ENCODE measurements at regions of chr10 and their contacts with region 1.

Region 1: GRCh38 chr10:8053446-8054290 is 820 bp upstream of the GATA3 start:
- DNase-seq: peak; percentile 80 to 98 (median 94)
- ATAC-seq: peak; percentile 59
- H3K4me3 ChIP-seq: peak overlapping the region; percentile 96
- H3K4me3 Mint-ChIP-seq: peak overlapping the region; percentile 95
- H3K27ac ChIP-seq: peak overlapping the region; percentile 61 to 76
- H3K27ac Mint-ChIP-seq: peak overlapping the region; percentile 97
- H3K4me1 ChIP-seq: peaks cover 67% of the 10 kb centered on the region
- H3K4me1 Mint-ChIP-seq: peaks cover 52% of the 10 kb centered on the region
- H3K27me3 ChIP-seq: peaks cover 37 to 44% of the 10 kb centered on the region in 2 experiments
- H3K27me3 Mint-ChIP-seq: peaks cover 38% of the 10 kb centered on the region
- CTCF ChIP-seq: peak; percentile 96

Region 2: GRCh38 chr10:8035006-8035640 is 18.5 kb before region 1 on chr10:
- CTCF ChIA-PET with region 1: interaction called, 3 read pairs
- POLR2A ChIA-PET with region 1: interaction called, 3 read pairs
- intact Hi-C with region 1: loop called in 1 of 2 experiments (anchors 2 kb)
- DNase-seq: peak in 2 of 14 experiments; percentile 42 to 50
- ATAC-seq: peak; percentile 41
- H3K4me3 ChIP-seq: no peak overlapping the region
- H3K4me3 Mint-ChIP-seq: peak overlapping the region; percentile 47
- H3K27ac ChIP-seq: no peak overlapping the region
- H3K27ac Mint-ChIP-seq: peak overlapping the region; percentile 60
- H3K4me1 ChIP-seq: peaks cover 46% of the 10 kb centered on the region
- H3K4me1 Mint-ChIP-seq: peaks cover 30% of the 10 kb centered on the region
- H3K27me3 ChIP-seq: peaks cover 76 to 77% of the 10 kb centered on the region in 2 experiments
- H3K27me3 Mint-ChIP-seq: peaks cover 88% of the 10 kb centered on the region
- CTCF ChIP-seq: no peak

Region 3: GRCh38 chr10:8245131-8245813 is 191.6 kb after region 1 on chr10:
- CTCF ChIA-PET with region 1: no interaction called
- POLR2A ChIA-PET with region 1: no interaction called
- intact Hi-C with region 1: loop called in 1 of 2 experiments (anchors 10 kb)
- DNase-seq: peak in 4 of 14 experiments; percentile 37 to 81 (median 69)
- ATAC-seq: peak; percentile 90
- H3K4me3 ChIP-seq: peak overlapping the region; percentile 1
- H3K4me3 Mint-ChIP-seq: peak overlapping the region; percentile 79
- H3K27ac ChIP-seq: peak overlapping the region; percentile 32 to 72
- H3K27ac Mint-ChIP-seq: peak overlapping the region; percentile 92
- H3K4me1 ChIP-seq: peaks cover 44% of the 10 kb centered on the region
- H3K4me1 Mint-ChIP-seq: peaks cover 77% of the 10 kb centered on the region
- H3K27me3 ChIP-seq: no peaks in the 10 kb centered on the region
- H3K27me3 Mint-ChIP-seq: no peaks in the 10 kb centered on the region
- CTCF ChIP-seq: no peak

Region 4: DNA sequence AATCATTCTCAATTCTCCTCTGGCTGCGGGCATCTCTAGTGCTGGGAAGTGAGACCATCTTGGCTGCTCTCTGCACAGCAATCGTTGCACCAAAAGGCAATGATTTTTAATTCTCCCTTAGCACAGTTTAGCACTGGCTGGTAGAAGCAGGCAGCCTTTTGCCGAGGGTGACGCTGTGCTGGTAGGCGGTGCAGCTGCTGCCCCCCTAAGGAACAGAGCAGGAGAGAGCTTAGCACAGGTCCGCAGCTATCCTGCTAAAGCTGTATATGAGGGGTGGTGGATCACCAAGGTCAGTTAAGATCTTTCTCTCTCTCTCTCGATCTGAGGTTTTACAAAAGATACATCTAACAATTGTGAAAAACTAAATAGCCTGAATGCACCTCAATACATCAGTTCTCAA is 391.0 kb after region 1 on chr10:
- CTCF ChIA-PET with region 1: no interaction called
- POLR2A ChIA-PET with region 1: interaction called, 7 read pairs
- intact Hi-C with region 1: loop called in 1 of 2 experiments (anchors 10 kb)
- DNase-seq: peak; percentile 6 to 73 (median 34)
- ATAC-seq: peak; percentile 87
- H3K4me3 ChIP-seq: no peak overlapping the region
- H3K4me3 Mint-ChIP-seq: no peak overlapping the region
- H3K27ac ChIP-seq: no peak overlapping the region
- H3K27ac Mint-ChIP-seq: no peak overlapping the region
- H3K4me1 ChIP-seq: peaks cover 5% of the 10 kb centered on the region
- H3K4me1 Mint-ChIP-seq: peaks cover 15% of the 10 kb centered on the region
- H3K27me3 ChIP-seq: no peaks in the 10 kb centered on the region
- H3K27me3 Mint-ChIP-seq: no peaks in the 10 kb centered on the region
- CTCF ChIP-seq: peak; percentile 57

Region 5: GRCh38 chr10:9010093-9010492 is 956.4 kb after region 1 on chr10:
- CTCF ChIA-PET with region 1: no interaction called
- POLR2A ChIA-PET with region 1: interaction called, 3 read pairs
- intact Hi-C with region 1: loop called in 1 of 2 experiments (anchors 10 kb)
- DNase-seq: peak in 10 of 14 experiments; percentile 8 to 85 (median 54)
- ATAC-seq: peak; percentile 88
- H3K4me3 ChIP-seq: no peak overlapping the region
- H3K4me3 Mint-ChIP-seq: peak overlapping the region; percentile 76
- H3K27ac ChIP-seq: no peak overlapping the region
- H3K27ac Mint-ChIP-seq: peak overlapping the region; percentile 85
- H3K4me1 ChIP-seq: peaks cover 8% of the 10 kb centered on the region
- H3K4me1 Mint-ChIP-seq: peaks cover 63% of the 10 kb centered on the region
- H3K27me3 ChIP-seq: no peaks in the 10 kb centered on the region
- H3K27me3 Mint-ChIP-seq: no peaks in the 10 kb centered on the region
- CTCF ChIP-seq: no peak

Region 6: DNA sequence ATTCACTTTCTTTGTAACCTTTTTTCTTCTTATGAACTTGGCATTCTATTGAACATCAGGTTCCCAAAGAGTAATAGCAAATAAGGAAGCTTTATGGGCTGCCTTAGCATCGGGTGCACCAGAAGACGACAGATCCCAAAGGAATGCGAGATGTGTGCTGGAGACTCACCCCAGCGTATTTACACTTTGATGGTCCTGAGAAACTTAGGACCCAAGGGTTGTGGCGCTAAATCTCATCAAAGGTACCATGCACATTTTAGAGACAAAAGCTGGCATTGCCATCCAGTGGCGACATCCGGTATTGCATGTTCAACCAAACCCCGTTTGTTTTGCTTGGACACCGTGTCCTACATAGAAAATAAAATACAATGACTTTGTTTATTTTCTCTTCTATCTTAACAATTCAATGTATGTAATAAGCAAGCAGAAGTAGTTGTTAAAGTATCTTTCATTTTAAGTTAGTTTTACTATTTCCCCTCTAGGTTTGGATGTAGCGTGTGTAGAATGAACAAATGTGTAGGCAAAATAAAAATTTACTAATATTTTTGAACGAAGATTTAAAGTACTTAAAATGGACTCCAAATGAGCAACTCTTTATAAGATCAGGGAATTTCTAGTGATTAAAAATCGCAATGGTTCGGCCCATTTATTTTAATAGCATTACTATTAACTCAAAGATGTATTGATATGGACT is 1155.6 kb after region 1 on chr10:
- CTCF ChIA-PET with region 1: no interaction called
- POLR2A ChIA-PET with region 1: interaction called, 3 read pairs
- intact Hi-C with region 1: loop called (anchors 5 to 10 kb)
- DNase-seq: peak; percentile 51 to 81 (median 69)
- ATAC-seq: peak; percentile 49
- H3K4me3 ChIP-seq: no peak overlapping the region
- H3K4me3 Mint-ChIP-seq: no peak overlapping the region
- H3K27ac ChIP-seq: no peak overlapping the region
- H3K27ac Mint-ChIP-seq: no peak overlapping the region
- H3K4me1 ChIP-seq: peaks cover 3% of the 10 kb centered on the region
- H3K4me1 Mint-ChIP-seq: peaks cover 8% of the 10 kb centered on the region
- H3K27me3 ChIP-seq: peaks cover 0 to 5% of the 10 kb centered on the region in 2 experiments
- H3K27me3 Mint-ChIP-seq: peaks cover 15% of the 10 kb centered on the region
- CTCF ChIP-seq: peak; percentile 98